Right cardiac atrium (tissue), 5 donors: ENCODE measurements at regions of chr15 and their contacts with region 1.

Region 1: DNA sequence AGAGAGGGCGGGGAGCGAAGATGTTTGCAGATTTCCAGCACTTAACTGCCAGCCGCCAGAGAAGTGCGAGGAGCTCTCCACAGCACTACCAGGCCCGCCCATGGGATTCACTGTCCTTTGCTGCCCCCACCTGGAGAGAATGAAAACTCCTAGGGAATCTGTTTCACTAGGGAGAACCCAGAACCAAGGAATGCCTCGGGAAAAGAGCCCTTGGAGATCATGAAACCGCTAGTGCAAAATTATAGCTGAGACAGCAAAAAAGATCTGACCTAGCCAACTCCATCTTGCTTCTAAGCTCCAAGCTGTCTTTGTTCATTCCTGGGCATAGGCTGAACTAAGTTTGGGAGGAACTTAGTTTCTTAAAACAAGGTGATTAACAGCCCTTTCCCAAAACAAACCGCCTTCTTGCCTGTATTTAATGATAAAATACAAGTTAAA is 82.6 kb upstream of the GCNT3 start:
- DNase-seq: peak; percentile 60 to 81 (median 69)
- ATAC-seq: peak; percentile 93 to 96
- H3K4me3 ChIP-seq: no peak overlapping the region
- H3K27ac ChIP-seq: no peak overlapping the region
- H3K4me1 ChIP-seq: no peaks in the 10 kb centered on the region
- H3K27me3 ChIP-seq: no peaks in the 10 kb centered on the region

Region 2: DNA sequence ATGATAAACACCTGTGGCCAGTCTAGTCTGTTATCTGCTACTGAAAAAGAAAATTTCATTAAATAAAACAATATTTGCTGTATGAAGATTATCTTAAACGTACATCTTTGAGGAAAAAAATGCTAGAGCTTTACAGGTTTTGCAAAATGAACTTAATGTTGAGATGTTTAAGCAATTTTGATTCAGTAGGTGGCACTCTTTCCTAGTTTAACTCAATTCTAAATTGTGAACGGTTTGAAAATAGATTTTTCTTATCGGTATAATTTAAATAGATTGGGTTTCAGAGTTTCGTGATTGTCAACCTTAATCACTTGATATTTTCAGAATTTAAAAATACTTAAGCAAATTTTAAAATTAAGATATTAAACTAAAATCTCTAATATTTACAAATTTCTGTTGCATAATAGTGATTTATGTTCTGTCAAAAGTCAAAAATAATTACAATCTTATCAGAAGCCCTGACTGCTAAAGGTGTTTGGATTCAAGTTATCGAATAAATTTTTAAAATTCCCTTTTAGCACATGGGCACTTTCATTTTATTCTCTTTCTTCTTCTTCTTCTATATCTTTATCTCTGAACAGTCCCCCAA is 548.5 kb before region 1 on chr15:
- intact Hi-C with region 1: loop called in 1 of 4 experiments (anchors 10 kb)
- DNase-seq: no peak
- ATAC-seq: no peak
- H3K4me3 ChIP-seq: no peak overlapping the region
- H3K27ac ChIP-seq: no peak overlapping the region
- H3K4me1 ChIP-seq: no peaks in the 10 kb centered on the region
- H3K27me3 ChIP-seq: no peaks in the 10 kb centered on the region

Region 3: GRCh38 chr15:59622289-59622688 is 93.3 kb after region 1 on chr15:
- intact Hi-C with region 1: loop called in 1 of 4 experiments (anchors 10 kb)
- DNase-seq: peak; percentile 18 to 58 (median 49)
- ATAC-seq: peak; percentile 31 to 72
- H3K4me3 ChIP-seq: no peak overlapping the region
- H3K27ac ChIP-seq: no peak overlapping the region
- H3K4me1 ChIP-seq: no peaks in the 10 kb centered on the region
- H3K27me3 ChIP-seq: no peaks in the 10 kb centered on the region